Naive thymus-derived CD8-positive, alpha-beta T cell (primary cell): ENCODE measurements at regions of chr1 and their contacts with region 1.

Region 1: GRCh38 chr1:206544562-206545257 is 37.4 kb downstream of the RASSF5 start:
- DNase-seq: peak; percentile 69 to 90 (median 80)
- ATAC-seq: peak; percentile 91 to 93
- H3K4me3 Mint-ChIP-seq: peak overlapping the region in 2 of 10 donors; percentile 22 to 24
- H3K27ac Mint-ChIP-seq: peak overlapping the region in 5 of 10 donors; percentile 52 to 81 (median 63)
- H3K4me1 Mint-ChIP-seq: peaks cover 5 to 20% (median 17%) of the 10 kb centered on the region in 4 donors
- H3K27me3 Mint-ChIP-seq: no peaks in the 10 kb centered on the region

Region 2: GRCh38 chr1:206479183-206480125 is 65.3 kb before region 1 on chr1:
- POLR2A ChIA-PET with region 1: no interaction called
- DNase-seq: peak; percentile 47 to 82 (median 62)
- ATAC-seq: peak; percentile 84 to 91
- H3K4me3 Mint-ChIP-seq: peak overlapping the region in 4 of 10 donors; percentile 22 to 58 (median 33)
- H3K27ac Mint-ChIP-seq: peak overlapping the region; percentile 38 to 92 (median 84)
- H3K4me1 Mint-ChIP-seq: peaks cover 6 to 35% (median 24%) of the 10 kb centered on the region in 4 donors
- H3K27me3 Mint-ChIP-seq: no peaks in the 10 kb centered on the region

Region 3: GRCh38 chr1:206583707-206584648 is 39.3 kb after region 1 on chr1:
- POLR2A ChIA-PET with region 1: interaction called, 825 read pairs
- DNase-seq: peak; percentile 66 to 90 (median 82)
- ATAC-seq: peak; percentile 31 to 39
- H3K4me3 Mint-ChIP-seq: peak overlapping the region; percentile 61 to 98 (median 87)
- H3K27ac Mint-ChIP-seq: peak overlapping the region; percentile 89 to 99 (median 96)
- H3K4me1 Mint-ChIP-seq: peaks cover 36 to 79% (median 66%) of the 10 kb centered on the region in 4 donors
- H3K27me3 Mint-ChIP-seq: no peaks in the 10 kb centered on the region

Region 4: DNA sequence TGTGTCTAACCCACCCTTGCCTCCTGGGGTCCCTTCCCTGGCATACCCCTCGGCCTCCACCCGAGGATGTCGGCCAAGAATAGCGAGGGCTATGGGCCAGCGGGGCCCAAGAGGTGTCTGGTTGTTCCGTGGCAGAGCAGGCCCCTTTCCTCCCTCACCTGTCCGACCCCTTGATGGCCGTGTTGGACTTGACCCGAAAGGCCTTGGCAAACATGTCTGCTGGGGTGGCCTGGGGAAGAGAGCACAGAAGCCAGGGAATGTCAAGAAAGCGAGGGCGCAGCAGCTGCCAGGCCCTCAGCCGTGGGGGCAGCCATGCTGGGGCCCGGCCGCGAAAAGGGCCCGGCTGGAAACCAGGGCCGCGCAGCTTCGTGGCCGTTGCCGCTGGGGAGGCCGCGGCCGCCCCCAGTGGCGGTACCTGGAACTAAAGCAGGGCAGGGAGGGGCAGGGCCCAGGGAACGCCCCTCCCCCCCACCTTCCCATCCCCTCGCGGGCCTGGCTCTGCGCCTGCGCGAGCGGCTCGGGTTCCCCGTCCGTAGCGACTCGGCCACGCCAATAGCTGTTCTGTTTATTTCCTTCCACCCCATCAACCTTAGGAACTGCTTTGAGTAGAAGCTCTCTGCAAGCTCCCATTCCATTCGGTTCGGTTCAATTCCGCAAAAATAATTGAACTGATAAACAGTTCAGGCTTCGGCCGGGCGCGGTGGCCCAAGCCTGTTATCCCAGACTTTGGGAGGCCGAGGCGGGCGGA is 67.6 kb after region 1 on chr1 and contains the start of gene EIF2D:
- POLR2A ChIA-PET with region 1: interaction called, 12 read pairs
- DNase-seq: peak; percentile 87 to 97 (median 94)
- ATAC-seq: peak; percentile 98
- H3K4me3 Mint-ChIP-seq: peak within 1 kb of the TSS; percentile 87 to 97 (median 93)
- H3K27ac Mint-ChIP-seq: peak within 1 kb of the TSS; percentile 93 to 99 (median 96)
- H3K4me1 Mint-ChIP-seq: peaks cover 12 to 24% (median 20%) of the 10 kb centered on the region in 4 donors
- H3K27me3 Mint-ChIP-seq: peaks cover 0 to 2% (median 0%) of the 10 kb centered on the region in 5 donors
- polyA plus RNA-seq, gene EIF2D: 38.9 to 46.0 (median 39.1) TPM